ENCODE measurements at regions of chr15 and their contacts with region 1.

Region 1: DNA sequence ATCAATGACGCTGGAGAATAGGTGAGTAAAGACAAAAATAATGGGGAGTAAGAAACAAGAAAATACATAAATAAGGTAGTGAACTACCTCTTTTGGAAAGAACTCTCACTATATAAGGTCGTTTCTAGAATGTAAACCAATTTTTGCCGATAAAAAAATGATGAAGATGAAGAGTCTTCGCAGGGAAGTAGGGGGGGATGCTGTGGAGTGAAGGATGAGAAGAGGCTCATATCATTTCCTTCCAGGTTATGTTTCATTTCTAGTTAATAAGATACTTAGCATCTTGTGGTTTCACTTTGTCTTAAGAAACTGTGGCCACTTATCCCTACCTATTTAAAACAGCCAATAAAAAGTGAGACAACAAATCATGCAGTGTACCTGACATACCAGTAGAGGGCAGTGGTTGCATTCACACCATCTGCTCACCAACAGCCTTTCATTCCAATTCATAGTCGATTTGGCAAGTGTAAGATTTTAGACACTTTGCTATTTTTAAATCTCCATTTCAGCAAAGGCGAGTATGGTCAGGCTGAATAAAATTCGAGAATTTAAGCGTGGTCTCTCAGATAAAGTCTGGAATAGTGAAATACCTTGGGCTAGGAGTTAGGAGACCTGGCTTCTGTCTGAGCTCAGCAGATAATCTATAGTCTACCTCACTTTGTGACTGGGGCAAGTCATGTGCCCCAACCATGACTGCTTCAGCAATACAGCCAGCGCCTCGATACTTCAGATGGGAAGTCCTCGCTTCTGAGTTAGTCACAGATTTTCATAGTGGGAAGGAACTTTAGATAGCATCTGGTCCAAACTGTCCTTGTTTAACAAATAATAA is 28.9 kb upstream of the ICE2 start:
- DNase-seq: peak; percentile 69
- ATAC-seq: peak; percentile 81
- H3K4me3 Mint-ChIP-seq: no peak overlapping the region
- H3K27ac Mint-ChIP-seq: peak overlapping the region; percentile 73
- H3K4me1 Mint-ChIP-seq: peaks cover 48% of the 10 kb centered on the region
- H3K27me3 Mint-ChIP-seq: no peaks in the 10 kb centered on the region
- CTCF ChIP-seq: peak; percentile 94

Region 2: DNA sequence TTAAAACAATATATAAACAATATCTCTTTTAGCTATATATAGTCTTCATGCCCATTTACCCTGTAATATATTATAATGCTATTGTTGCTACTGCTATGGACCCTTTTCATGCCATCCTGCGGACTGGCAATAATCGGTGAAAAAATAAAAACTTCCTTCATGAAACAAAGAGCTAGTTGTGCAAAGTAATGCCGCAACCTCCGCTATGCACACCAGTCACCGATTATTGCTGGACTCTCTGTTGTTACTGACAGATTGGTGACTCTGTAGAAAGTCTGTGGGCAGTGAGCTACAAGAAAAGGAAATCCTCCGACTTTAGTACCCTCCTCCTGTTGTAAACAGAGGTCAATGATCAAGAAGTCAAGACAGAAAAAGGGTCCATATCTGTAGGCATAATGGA is 11.0 kb before region 1 on chr15:
- CTCF ChIA-PET with region 1: interaction called, 12 read pairs
- POLR2A ChIA-PET with region 1: no interaction called
- intact Hi-C with region 1: no loop called
- DNase-seq: no peak
- ATAC-seq: no peak
- H3K4me3 Mint-ChIP-seq: no peak overlapping the region
- H3K27ac Mint-ChIP-seq: no peak overlapping the region
- H3K4me1 Mint-ChIP-seq: peaks cover 4% of the 10 kb centered on the region
- H3K27me3 Mint-ChIP-seq: no peaks in the 10 kb centered on the region
- CTCF ChIP-seq: no peak

Region 3: DNA sequence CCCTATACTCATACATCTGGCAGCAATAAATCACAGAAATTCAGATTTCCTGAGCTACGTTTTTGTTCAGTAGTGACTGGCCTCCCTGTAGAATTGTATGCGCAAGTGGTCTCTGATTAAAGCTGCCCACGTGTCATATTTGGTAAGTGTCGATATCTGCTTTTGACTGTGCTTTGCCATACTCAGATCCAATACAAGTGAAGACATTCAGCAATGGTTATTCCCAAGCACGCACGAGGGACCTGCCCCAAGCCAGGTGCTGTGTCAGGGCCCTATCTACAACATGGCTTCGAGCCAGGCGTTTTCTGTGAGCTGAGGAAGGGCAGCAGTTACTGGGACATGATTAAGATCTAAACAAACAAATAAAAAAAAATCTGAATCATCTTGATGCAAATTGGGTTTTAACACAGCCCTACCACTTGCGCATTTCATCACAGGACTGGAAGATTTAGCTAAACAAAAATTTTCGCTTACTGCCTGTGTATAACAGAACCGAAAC is 18.4 kb after region 1 on chr15:
- CTCF ChIA-PET with region 1: interaction called, 132 read pairs
- POLR2A ChIA-PET with region 1: interaction called, 12 read pairs
- intact Hi-C with region 1: no loop called
- DNase-seq: peak; percentile 27
- ATAC-seq: peak; percentile 36
- H3K4me3 Mint-ChIP-seq: no peak overlapping the region
- H3K27ac Mint-ChIP-seq: peak overlapping the region; percentile 81
- H3K4me1 Mint-ChIP-seq: peaks cover 56% of the 10 kb centered on the region
- H3K27me3 Mint-ChIP-seq: no peaks in the 10 kb centered on the region
- CTCF ChIP-seq: no peak

Region 4: GRCh38 chr15:60643555-60643954 is 135.7 kb after region 1 on chr15:
- CTCF ChIA-PET with region 1: no interaction called
- POLR2A ChIA-PET with region 1: no interaction called
- intact Hi-C with region 1: no loop called
- DNase-seq: no peak
- ATAC-seq: no peak
- H3K4me3 Mint-ChIP-seq: no peak overlapping the region
- H3K27ac Mint-ChIP-seq: no peak overlapping the region
- H3K4me1 Mint-ChIP-seq: peaks cover 4% of the 10 kb centered on the region
- H3K27me3 Mint-ChIP-seq: no peaks in the 10 kb centered on the region
- CTCF ChIP-seq: no peak

Measured in activated CD8-positive, alpha-beta T cell treated with anti-CD3 and anti-CD28 coated beads for 36 hours (primary cell).